Naive thymus-derived CD4-positive, alpha-beta T cell (primary cell): ENCODE measurements at regions of chr19 and their contacts with region 1.

Region 1: DNA sequence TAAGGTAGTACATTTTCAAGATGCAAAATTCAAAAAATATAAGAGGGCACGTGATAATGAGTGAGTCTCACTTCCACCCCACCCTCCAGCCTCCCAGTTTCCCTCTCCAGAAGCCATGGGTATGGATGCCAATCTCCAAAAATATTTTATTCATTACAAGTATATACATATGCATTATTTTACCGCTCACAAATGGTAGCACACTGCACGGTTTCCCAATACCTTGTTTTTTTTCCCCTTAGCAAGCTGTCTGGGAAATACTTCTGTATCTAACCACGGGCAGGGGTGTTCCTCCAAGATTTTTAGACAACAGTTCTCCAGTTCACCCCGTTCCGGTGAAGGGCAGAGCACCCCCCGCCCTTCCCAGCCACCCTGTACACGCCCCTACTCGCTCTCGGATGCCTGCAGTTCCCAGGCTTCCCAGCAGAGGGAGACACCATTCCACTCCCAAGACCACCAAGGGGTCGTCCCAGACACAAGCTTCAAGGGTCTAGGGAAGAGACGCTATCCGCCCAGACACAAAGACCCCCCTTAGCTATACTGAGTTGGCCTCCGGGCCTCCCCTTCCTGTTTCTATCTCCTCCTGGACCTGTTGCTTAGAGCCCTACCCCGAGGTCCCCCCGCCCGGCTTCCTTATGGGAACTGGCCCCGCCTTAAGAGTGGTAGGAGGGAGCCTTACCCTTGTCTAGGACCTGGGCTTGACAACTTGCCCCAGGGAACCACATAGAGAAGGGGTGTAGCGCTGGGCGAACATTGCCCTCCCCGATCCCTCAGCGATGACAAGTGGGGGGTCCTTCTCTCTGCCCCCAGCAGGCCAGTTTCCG is 1.1 kb upstream of the FXYD3 start:
- DNase-seq: peak; percentile 46 to 77 (median 59)
- ATAC-seq: peak; percentile 92
- H3K4me3 ChIP-seq: no peak overlapping the region
- H3K4me3 Mint-ChIP-seq: peak overlapping the region in 7 of 10 donors; percentile 2 to 49 (median 25)
- H3K27ac ChIP-seq: no peak overlapping the region
- H3K27ac Mint-ChIP-seq: peak overlapping the region in 1 of 9 donors; percentile 50
- H3K4me1 ChIP-seq: peaks cover 0 to 7% of the 10 kb centered on the region in 2 donors
- H3K4me1 Mint-ChIP-seq: peaks cover 5 to 8% (median 6%) of the 10 kb centered on the region in 7 donors
- H3K27me3 ChIP-seq: no peaks in the 10 kb centered on the region
- H3K27me3 Mint-ChIP-seq: peaks cover 0 to 20% (median 0%) of the 10 kb centered on the region in 5 donors

Region 2: DNA sequence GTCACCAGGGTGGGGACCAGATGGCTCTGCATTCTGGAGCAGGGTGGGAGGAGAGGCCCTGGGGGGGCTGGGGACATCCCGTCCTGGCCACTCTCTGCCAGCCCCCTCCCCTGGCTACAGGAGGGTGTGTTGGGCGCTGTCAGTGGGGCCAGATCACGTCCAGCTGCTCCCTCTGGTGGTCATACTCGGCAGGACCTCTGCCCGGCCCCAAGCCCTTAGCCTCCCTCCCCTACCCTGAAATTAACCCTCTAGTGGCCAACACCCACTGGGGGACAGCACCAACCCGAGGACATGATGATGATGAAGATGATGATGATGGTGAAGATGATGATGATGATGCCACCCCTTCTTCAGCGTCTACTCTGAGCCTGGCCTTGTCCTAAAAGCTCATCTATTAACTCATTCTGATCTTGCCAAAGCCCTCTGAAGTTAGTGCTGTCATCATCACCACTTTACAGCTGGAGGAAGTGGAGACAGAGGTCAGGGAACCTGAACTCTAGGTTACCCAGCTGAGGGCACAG is 20.9 kb after region 1 on chr19:
- CTCF ChIA-PET with region 1: interaction called, 3 read pairs
- POLR2A ChIA-PET with region 1: no interaction called
- intact Hi-C with region 1: loop called in 1 of 2 experiments (anchors 1 kb)
- DNase-seq: peak in 8 of 9 donors; percentile 41 to 74 (median 51)
- ATAC-seq: peak; percentile 88
- H3K4me3 ChIP-seq: no peak overlapping the region
- H3K4me3 Mint-ChIP-seq: no peak overlapping the region
- H3K27ac ChIP-seq: no peak overlapping the region
- H3K27ac Mint-ChIP-seq: no peak overlapping the region
- H3K4me1 ChIP-seq: peaks cover 0 to under 1% of the 10 kb centered on the region in 2 donors
- H3K4me1 Mint-ChIP-seq: peaks cover 4 to 13% (median 6%) of the 10 kb centered on the region in 7 donors
- H3K27me3 ChIP-seq: no peaks in the 10 kb centered on the region
- H3K27me3 Mint-ChIP-seq: peaks cover 0 to 11% (median 0%) of the 10 kb centered on the region in 5 donors

Region 3: GRCh38 chr19:35352448-35353304 is 238.1 kb after region 1 on chr19:
- CTCF ChIA-PET with region 1: no interaction called
- POLR2A ChIA-PET with region 1: no interaction called
- intact Hi-C with region 1: no loop called
- DNase-seq: peak in 8 of 9 donors; percentile 50 to 73 (median 66)
- ATAC-seq: peak; percentile 85
- H3K4me3 ChIP-seq: no peak overlapping the region
- H3K4me3 Mint-ChIP-seq: peak overlapping the region in 2 of 10 donors; percentile 16 to 21
- H3K27ac ChIP-seq: no peak overlapping the region
- H3K27ac Mint-ChIP-seq: peak overlapping the region in 1 of 9 donors; percentile 54
- H3K4me1 ChIP-seq: peaks cover 3 to 8% of the 10 kb centered on the region in 2 donors
- H3K4me1 Mint-ChIP-seq: peaks cover 9 to 22% (median 12%) of the 10 kb centered on the region in 7 donors
- H3K27me3 ChIP-seq: no peaks in the 10 kb centered on the region
- H3K27me3 Mint-ChIP-seq: no peaks in the 10 kb centered on the region